Upper lobe of right lung (tissue), 1 donor: ENCODE measurements at regions of chr1 and their contacts with region 1.

Region 1: DNA sequence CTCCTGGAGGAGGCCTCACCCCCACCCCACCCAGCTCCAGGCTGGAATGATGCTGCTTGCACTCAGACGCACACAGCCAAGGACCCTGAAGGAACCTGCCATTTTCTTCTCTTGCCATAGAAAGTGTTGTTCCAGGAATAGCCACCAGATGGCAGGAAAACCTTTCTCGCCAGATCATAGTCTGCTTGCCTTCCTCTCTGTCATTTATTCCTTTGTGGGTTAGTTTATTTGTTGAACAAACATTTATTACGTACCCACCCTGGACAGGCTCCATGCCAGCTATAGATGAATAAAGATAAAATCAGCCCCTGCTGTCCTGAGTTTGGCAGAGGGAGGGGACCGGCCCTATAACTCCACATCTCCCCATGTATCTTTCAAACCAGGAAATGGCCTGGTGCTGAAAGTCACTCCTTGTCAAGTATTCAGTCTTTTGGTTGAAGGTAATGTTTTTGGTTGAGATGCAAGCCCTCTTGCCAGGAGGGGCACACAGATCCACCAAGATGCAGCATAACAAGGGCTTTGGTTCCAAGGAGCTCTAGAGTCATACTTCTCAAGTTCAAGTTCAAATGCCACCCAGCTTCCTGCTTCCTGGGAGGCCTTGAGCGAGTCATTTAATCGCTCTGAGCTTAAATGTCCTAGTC is 7.0 kb upstream of the KCNC4 start:
- DNase-seq: no peak
- ATAC-seq: peak; percentile 65
- H3K4me3 ChIP-seq: no peak overlapping the region
- H3K27ac ChIP-seq: no peak overlapping the region
- H3K4me1 ChIP-seq: no peaks in the 10 kb centered on the region
- H3K27me3 ChIP-seq: no peaks in the 10 kb centered on the region
- CTCF ChIP-seq: peak; percentile 86

Region 2: DNA sequence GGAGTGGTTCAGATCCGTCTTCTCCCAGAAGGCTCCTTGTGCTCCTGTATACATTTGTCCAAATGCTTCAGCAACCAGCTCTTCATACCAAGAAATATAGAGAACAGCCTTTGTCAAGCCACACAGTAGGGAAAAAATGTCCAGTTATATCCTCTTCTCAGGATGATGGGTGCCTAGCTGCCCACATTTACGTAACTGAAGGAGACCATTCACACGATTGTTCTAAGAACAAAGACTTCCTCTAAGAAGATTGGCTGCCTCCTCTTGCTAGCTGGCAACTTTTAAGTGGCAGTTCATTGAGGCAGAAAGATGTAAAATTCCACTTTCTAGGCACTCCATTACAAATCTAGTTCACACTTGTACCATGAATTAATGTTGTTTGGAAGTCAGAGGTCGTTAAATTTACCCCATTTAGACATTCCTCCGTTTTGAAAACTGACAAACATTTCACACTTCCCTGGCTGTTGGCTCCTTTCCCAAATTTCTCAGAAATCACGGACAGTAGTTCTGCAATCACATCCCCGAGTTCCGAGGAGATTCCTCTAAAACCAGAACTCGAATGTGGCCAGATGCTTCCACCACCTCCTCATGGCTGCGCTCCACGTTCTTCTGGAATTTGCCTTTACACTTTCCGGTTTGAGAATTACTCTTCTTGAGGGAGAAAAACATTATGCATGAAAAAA is 338.1 kb before region 1 on chr1:
- intact Hi-C with region 1: no loop called
- DNase-seq: no peak
- ATAC-seq: no peak
- H3K4me3 ChIP-seq: no peak overlapping the region
- H3K27ac ChIP-seq: no peak overlapping the region
- H3K4me1 ChIP-seq: peaks cover 10% of the 10 kb centered on the region
- H3K27me3 ChIP-seq: no peaks in the 10 kb centered on the region
- CTCF ChIP-seq: no peak

Region 3: GRCh38 chr1:110068646-110069403 is 134.3 kb before region 1 on chr1:
- intact Hi-C with region 1: no loop called
- DNase-seq: no peak
- ATAC-seq: no peak
- H3K4me3 ChIP-seq: no peak overlapping the region
- H3K27ac ChIP-seq: no peak overlapping the region
- H3K4me1 ChIP-seq: peaks cover 22% of the 10 kb centered on the region
- H3K27me3 ChIP-seq: peaks cover 70% of the 10 kb centered on the region
- CTCF ChIP-seq: no peak

Region 4: DNA sequence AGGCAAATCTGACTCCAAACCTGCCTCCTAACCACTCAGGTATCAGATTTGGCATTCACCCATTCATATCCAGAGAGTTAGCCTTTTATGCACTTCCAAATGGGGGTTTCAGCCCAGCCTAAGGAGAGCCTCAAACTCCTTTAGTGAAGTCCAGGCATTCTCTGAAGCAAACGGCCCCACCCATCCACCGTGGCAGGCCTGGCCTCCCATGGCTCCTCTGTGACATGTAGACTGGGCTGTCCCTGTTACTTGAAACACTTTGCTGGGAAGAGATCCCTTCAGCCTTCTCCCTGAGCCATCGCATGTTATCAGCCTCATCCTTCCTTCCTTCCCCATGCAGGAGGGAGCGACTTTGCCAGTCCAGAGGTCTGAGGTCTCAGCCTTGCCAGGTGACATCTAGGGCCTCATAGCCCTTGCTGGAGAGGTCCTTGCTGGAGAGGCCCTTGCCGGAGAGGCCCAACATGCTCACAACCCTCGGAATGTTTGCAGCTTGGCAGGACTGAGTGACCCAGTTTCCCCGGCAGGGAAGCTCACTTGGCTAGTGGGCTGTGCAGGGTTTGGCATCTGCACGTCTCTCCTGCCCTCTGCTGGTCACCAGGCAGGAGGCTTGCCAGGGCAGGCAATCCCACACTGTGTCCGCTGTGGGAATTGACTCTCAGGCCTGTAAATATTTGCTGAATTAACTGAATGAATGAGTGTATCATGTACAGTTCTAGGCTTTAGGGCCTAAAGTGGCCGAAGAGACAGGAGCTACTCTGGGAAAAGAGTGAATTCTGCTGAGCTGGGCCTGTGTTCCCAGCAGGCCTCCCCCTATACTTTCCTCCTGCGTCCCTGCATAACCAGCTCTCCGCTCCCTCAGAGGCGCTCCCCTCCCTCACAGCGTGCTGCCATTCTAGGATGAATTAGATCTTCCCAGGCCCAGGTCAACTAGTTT is 109.3 kb after region 1 on chr1:
- intact Hi-C with region 1: loop called (anchors 2 kb)
- DNase-seq: peak; percentile 88
- ATAC-seq: peak; percentile 99
- H3K4me3 ChIP-seq: no peak overlapping the region
- H3K27ac ChIP-seq: no peak overlapping the region
- H3K4me1 ChIP-seq: peaks cover 6% of the 10 kb centered on the region
- H3K27me3 ChIP-seq: no peaks in the 10 kb centered on the region
- CTCF ChIP-seq: peak; percentile 94

Region 5: DNA sequence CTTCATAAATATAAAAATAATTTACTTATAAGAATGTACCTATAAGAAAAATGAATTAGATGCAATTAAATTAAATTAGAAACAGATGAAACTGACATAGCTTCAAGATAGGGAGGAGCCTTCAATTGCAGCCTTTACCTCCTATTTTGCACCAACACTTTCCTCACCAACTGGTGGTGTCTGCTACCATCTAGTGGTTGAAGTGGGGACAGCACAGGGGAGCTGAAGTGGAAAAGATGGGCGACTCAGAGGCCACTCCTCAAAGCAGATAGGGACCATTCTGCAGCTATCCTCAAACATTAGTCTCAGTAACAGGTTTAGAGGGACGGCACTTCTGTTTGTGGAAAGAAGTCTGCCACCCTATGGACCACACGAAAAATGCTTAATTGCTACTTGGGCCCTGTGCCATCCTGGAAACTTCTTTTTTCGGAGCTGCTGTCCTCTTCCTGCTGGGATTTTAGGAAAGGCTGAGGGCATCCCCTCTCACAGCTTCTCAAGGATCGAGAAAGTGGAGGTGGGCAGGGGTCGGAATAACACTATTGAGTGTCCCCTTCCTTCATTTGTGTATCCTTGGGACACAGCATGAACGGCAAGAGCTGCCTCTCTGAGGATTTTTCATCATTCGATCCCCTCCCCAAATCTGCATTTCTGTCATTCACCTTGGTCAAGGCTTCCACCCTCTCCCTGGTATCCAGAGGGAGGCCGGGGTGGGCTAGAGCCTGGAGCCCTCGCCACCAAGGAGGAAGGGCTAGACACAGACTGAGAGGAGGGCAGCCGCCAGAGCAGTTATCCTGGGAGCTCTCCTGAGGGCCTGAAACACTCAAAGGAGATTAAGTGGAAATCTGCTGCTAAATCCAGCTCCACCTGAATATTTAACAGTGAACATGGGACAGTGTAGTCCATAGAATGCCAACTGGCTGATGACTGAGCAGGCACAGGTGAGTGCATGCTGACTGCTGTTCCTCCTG is 257.4 kb after region 1 on chr1:
- intact Hi-C with region 1: loop called (anchors 5 kb)
- DNase-seq: no peak
- ATAC-seq: peak; percentile 91
- H3K4me3 ChIP-seq: no peak overlapping the region
- H3K27ac ChIP-seq: no peak overlapping the region
- H3K4me1 ChIP-seq: no peaks in the 10 kb centered on the region
- H3K27me3 ChIP-seq: no peaks in the 10 kb centered on the region
- CTCF ChIP-seq: peak; percentile 98